Left cardiac atrium (tissue), 4 donors: ENCODE measurements at regions of chr2 and their contacts with region 1.

Region 1: DNA sequence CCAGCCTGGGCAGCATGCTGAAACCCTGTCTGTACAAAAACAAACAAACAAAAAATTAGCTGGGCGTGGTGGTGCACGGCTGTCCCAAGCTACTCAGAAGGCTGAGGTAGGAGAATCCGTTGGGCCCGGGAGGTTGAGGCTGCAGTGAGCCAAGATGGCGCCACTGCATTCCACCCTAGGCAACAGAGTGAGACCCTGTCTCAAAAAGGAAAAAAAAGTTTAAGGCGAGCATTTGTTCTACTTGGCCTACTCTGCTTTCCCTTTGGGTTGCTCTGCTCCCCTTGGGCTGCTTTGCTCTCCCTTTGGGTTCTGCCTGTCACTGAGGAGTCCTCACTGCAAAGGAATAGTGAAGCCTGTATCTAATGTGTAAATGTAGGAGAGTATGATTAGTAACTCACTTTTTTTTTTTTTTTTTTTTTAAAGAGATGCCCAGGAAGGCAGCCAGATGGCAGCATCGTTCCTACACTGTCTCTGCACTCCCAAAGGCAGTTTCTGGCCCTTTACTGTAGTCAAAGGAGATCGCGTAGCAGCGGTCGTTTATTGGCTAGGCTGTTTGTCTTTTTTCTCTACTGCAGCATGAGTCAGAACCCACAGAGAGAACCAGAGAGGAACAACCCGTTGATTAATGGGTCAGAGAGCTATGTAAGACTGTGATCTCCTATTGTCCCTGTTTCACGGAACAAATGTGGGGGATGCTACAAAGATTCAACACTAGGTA is 118.3 kb upstream of the CWC22 start:
- DNase-seq: peak; percentile 60
- ATAC-seq: peak; percentile 89 to 98

Region 2: DNA sequence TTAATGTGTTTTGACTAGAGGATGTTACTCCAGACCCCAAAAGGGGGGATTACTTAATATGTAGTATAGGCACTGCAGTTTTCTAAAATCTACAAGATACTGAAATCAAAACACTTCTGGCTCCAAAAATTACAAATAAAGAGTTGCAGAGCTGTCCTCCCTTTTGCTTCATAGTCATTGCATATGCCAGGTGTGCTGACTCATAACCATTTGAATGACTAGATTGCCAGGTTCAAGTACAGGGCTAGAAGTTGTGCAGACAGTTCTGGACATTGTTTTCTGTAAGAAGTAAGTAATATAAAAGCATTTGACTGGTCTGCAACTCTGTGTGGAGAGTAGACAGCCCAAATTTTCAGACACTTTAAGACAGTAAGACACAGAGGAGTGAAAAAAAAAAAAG is 125.0 kb before region 1 on chr2:
- intact Hi-C with region 1: no loop called
- DNase-seq: no peak
- ATAC-seq: peak in 1 of 2 donors; percentile 85

Region 3: GRCh38 chr2:181058378-181059269 is 933.2 kb after region 1 on chr2:
- intact Hi-C with region 1: loop called in 1 of 2 experiments (anchors 5 kb)
- DNase-seq: no peak
- ATAC-seq: no peak